ENCODE measurements at regions of chr15 and their contacts with region 1.

Region 1: GRCh38 chr15:74906446-74907162 is at the start of gene FAM219B:
- DNase-seq: peak; percentile 88
- H3K4me3 Mint-ChIP-seq: peak within 1 kb of the TSS; percentile 89
- H3K27ac Mint-ChIP-seq: peak within 1 kb of the TSS; percentile 92
- H3K4me1 Mint-ChIP-seq: peaks cover 28% of the 10 kb centered on the region
- H3K27me3 Mint-ChIP-seq: no peaks in the 10 kb centered on the region
- total RNA-seq, gene FAM219B: 60.3 to 63.0 TPM

Region 2: DNA sequence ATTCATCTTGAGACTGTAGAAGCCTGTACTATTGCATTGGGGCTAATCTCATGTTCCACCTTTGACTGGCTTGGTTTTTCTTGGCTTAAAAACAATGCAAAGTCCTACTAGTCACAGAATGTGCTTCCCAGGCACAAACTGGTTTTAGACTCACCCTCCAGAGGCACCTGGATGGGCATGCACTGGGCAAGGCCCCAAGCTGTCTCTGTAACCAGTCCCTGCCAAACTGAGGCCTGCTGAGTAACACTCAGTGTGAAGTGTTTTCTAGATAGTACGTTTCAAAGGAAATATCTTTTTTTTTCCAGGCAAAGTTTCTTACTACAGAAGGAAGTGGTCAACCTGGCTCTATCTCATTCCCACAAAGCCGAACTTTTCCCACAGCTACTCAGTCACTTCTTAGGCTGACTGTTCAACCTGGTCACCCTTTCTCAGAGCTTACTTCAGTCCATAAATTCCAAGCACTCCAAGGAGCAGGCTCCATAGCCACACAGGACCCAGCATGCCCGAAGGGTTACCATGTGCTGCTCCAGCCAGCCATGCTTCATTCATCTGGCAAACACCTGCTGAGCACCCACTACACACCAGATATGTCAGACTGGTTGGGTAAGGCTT is 1330.9 kb before region 1 on chr15:
- CTCF ChIA-PET with region 1: no interaction called
- intact Hi-C with region 1: no loop called
- DNase-seq: no peak
- H3K4me3 Mint-ChIP-seq: no peak overlapping the region
- H3K27ac Mint-ChIP-seq: no peak overlapping the region
- H3K4me1 Mint-ChIP-seq: peaks cover 2% of the 10 kb centered on the region
- H3K27me3 Mint-ChIP-seq: no peaks in the 10 kb centered on the region

Region 3: DNA sequence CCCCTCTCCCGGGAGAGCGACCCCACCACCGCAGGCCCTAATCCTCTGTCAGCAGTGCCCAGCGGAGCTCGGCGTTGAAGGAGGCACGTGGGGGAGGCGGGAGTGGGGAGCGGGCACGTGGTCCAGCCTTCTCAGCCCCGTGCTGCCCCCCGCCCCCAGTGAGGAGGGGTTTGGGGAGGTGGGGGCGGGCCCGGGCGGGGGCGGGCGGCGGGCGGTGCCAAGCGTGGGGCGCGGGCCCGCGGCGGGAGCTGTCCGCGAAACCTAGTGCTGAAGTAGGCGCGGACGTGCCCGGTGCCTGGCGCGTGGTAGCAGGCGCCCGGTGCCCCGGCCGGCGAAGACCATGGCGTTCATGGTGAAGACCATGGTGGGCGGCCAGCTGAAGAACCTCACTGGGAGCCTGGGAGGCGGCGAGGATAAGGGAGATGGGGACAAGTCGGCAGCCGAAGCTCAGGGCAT is 80.2 kb before region 1 on chr15 and contains the start of gene CPLX3:
- CTCF ChIA-PET with region 1: interaction called, 10 read pairs
- intact Hi-C with region 1: no loop called
- DNase-seq: peak; percentile 53
- H3K4me3 Mint-ChIP-seq: no peak within 1 kb of the TSS
- H3K27ac Mint-ChIP-seq: no peak within 1 kb of the TSS
- H3K4me1 Mint-ChIP-seq: peaks cover 6% of the 10 kb centered on the region
- H3K27me3 Mint-ChIP-seq: peaks cover 21% of the 10 kb centered on the region
- total RNA-seq, gene CPLX3: not detected

Region 4: DNA sequence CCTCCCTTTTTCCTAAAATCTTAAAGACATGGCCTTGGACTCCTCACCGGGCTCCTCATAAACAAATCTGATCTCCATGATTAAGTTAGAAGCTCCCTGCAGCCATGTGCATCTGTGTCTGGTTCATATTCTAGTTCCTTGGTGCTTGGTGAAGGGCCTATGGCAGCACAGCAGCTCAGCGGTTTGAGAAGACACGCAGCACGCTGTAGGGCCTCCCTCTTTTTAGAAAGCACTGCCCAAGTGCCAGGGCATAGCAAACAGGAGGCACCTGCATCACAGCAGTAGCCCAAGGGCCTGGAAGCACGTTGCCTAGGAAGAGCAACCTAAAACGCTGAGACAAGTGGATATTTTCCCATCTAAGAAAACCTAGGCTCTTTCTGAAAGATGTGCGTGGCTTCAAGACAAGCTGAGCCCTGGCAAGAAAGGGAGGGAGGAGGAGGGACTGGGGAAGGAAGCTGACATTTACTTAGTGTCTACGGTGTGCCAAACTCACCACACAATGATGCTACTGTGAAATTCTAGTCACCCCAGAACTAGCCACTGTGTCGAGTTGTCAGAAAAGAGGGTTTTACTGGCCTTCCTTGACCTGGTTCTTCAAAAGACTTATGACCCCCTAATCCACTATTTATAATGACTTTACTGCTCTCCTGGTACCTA is 48.8 kb before region 1 on chr15:
- CTCF ChIA-PET with region 1: interaction called, 21 read pairs
- intact Hi-C with region 1: no loop called
- DNase-seq: no peak
- H3K4me3 Mint-ChIP-seq: no peak overlapping the region
- H3K27ac Mint-ChIP-seq: peak overlapping the region; percentile 68
- H3K4me1 Mint-ChIP-seq: peaks cover 36% of the 10 kb centered on the region
- H3K27me3 Mint-ChIP-seq: no peaks in the 10 kb centered on the region

Region 5: GRCh38 chr15:74884428-74885223 is 22.0 kb before region 1 on chr15:
- CTCF ChIA-PET with region 1: interaction called, 27 read pairs
- intact Hi-C with region 1: no loop called
- DNase-seq: no peak
- H3K4me3 Mint-ChIP-seq: no peak overlapping the region
- H3K27ac Mint-ChIP-seq: no peak overlapping the region
- H3K4me1 Mint-ChIP-seq: peaks cover 9% of the 10 kb centered on the region
- H3K27me3 Mint-ChIP-seq: no peaks in the 10 kb centered on the region

Region 6: DNA sequence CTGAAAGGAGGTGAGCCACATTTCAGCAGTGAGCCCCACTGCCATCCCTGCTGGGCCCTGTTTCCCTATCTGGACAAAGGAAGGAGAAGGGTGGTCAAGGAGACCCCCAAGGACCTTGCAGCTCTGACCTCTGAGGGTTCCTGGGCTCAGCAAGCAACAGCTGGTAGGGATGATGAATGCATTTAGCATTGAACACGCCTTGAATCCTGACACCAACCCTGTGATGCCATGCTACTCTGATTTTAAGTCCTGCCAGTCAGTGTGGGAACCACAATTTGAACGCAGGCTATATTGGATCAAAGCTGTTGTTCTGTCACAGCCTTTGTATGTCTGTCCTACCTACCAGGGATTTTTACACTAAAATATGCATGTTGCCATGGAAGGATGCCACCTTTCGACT is 10.3 kb before region 1 on chr15:
- CTCF ChIA-PET with region 1: interaction called, 26 read pairs
- intact Hi-C with region 1: loop called (anchors 2 kb)
- DNase-seq: no peak
- H3K4me3 Mint-ChIP-seq: no peak overlapping the region
- H3K27ac Mint-ChIP-seq: no peak overlapping the region
- H3K4me1 Mint-ChIP-seq: peaks cover 23% of the 10 kb centered on the region
- H3K27me3 Mint-ChIP-seq: no peaks in the 10 kb centered on the region

Region 7: GRCh38 chr15:74937596-74938296 is 31.1 kb after region 1 on chr15 and contains the start of gene COX5A:
- CTCF ChIA-PET with region 1: interaction called, 11 read pairs
- intact Hi-C with region 1: loop called (anchors 2 kb)
- DNase-seq: peak; percentile 95
- H3K4me3 Mint-ChIP-seq: peak within 1 kb of the TSS; percentile 90
- H3K27ac Mint-ChIP-seq: peak within 1 kb of the TSS; percentile 89
- H3K4me1 Mint-ChIP-seq: peaks cover 33% of the 10 kb centered on the region
- H3K27me3 Mint-ChIP-seq: no peaks in the 10 kb centered on the region
- total RNA-seq, gene COX5A: 346 to 348 TPM

Measured in activated naive CD4-positive, alpha-beta T cell treated with anti-CD3 and anti-CD28 coated beads for 36 hours (primary cell).